Endothelial cell of umbilical vein (primary cell): ENCODE measurements at regions of chr6 and their contacts with region 1.

Region 1: DNA sequence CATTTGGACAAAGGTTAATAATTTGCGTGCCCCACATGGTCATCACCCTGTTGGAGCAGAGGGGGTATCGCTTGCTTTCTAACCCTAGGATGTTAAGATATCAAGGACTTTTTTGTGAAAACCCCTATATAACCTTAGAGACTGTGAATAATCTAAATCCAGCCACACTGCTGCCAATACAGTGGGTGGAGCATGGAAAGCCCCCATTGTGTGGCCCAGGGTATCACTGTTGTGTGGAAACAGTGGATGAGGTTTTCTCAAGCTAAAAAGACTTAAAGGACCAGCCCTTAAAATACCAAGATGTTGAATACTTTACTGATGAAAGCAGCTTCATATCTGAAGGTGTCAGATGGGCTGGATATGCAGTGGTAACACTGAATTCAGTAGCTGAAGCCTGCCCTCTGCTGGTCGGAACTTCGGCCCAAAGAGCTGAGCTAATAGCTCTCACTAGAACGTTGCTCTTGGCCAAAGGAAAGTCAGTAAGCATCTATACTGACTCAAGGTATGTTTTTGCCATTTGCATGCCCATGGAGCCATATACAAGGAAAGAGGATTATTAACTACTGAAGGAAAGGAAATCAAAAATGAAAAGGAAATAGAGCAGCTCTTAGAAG is 695.2 kb downstream of the PHF3 start:
- DNase-seq: peak; percentile 36
- H3K4me3 ChIP-seq: no peak overlapping the region
- H3K27ac ChIP-seq: no peak overlapping the region
- H3K4me1 ChIP-seq: no peaks in the 10 kb centered on the region
- H3K27me3 ChIP-seq: no peaks in the 10 kb centered on the region
- CTCF ChIP-seq: peak; percentile 46 to 62
- POLR2A ChIP-seq: no peak

Region 2: GRCh38 chr6:63352587-63353285 is 978.1 kb before region 1 on chr6:
- CTCF ChIA-PET with region 1: interaction called, 11 read pairs
- POLR2A ChIA-PET with region 1: no interaction called
- dilution Hi-C with region 1: no loop called
- intact Hi-C with region 1: no loop called
- DNase-seq: peak; percentile 27
- H3K4me3 ChIP-seq: no peak overlapping the region
- H3K27ac ChIP-seq: no peak overlapping the region
- H3K4me1 ChIP-seq: peaks cover 26% of the 10 kb centered on the region
- H3K27me3 ChIP-seq: no peaks in the 10 kb centered on the region
- CTCF ChIP-seq: peak in 1 of 2 donors; percentile 17
- POLR2A ChIP-seq: no peak

Region 3: GRCh38 chr6:63923139-63923739 is 407.6 kb before region 1 on chr6:
- CTCF ChIA-PET with region 1: interaction called, 11 read pairs
- POLR2A ChIA-PET with region 1: no interaction called
- dilution Hi-C with region 1: no loop called
- intact Hi-C with region 1: no loop called
- DNase-seq: peak; percentile 17
- H3K4me3 ChIP-seq: no peak overlapping the region
- H3K27ac ChIP-seq: no peak overlapping the region
- H3K4me1 ChIP-seq: no peaks in the 10 kb centered on the region
- H3K27me3 ChIP-seq: peaks cover 2% of the 10 kb centered on the region in 2 experiments
- CTCF ChIP-seq: peak; percentile 30 to 33
- POLR2A ChIP-seq: no peak

Region 4: DNA sequence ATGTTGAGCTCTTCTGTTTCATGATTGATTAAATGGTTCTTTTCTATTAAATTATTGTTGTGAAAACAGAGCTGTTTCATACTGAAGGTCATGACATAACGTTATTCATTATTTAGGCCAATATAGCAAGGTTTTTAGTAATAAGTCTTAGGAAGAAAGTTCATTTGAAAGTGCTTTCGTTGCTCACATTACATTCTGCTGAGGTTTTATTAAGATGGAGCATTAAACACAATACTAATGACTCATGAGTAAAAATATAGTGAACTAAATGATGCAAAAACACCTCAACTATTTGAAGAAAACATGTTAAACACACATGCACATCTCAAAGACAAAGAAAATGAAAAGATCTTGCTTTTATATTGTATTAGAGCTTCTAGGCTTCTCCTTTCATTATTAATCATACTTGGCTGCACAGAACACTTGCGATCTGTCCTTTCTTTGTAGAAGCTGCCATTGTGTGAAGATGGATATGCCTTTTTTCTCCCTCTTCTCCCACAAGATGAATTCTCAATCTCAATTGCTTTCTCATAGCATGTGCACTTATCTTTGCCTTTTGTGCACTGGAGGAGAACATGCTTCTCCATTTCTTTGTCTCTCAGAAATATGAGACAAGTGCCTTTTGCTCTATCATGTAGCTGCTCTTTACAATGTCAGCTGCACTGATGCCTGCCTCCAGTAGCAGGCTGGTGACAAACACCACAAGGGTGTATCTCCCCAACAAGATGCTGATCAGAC is 382.8 kb before region 1 on chr6:
- CTCF ChIA-PET with region 1: no interaction called
- POLR2A ChIA-PET with region 1: no interaction called
- dilution Hi-C with region 1: no loop called
- intact Hi-C with region 1: no loop called
- DNase-seq: no peak
- H3K4me3 ChIP-seq: no peak overlapping the region
- H3K27ac ChIP-seq: no peak overlapping the region
- H3K4me1 ChIP-seq: no peaks in the 10 kb centered on the region
- H3K27me3 ChIP-seq: no peaks in the 10 kb centered on the region
- CTCF ChIP-seq: no peak
- POLR2A ChIP-seq: no peak

Region 5: DNA sequence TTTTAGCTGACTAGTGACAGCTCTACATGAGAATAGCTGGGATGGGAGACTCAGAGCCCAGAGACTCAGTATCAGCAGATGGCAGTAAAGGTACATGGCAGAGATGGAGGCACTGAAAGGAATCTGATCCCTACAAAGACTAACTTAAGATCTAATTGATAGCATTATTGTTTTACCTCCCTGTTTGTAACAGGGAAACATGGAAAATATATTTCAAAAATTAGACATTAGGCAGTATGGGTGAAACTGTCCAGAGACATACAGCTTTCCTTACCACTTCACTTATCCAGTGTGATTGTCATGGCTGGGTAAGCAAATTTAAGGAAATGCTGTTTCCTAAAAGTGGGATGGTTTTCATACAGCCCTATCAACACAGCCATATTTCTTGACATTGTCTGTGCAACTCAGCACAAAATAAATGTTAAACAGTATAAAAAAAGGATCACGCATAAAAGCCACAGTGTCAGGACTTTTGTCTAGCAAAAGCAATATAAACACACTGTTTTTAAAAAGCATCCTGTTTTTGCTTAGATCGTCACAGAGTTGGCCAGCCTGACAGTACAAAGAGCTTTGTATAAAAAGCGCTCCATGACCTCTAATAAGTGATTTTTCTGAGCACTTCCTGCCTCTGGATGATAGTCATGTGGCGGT is 318.3 kb before region 1 on chr6:
- CTCF ChIA-PET with region 1: no interaction called
- POLR2A ChIA-PET with region 1: no interaction called
- dilution Hi-C with region 1: no loop called
- intact Hi-C with region 1: loop called (anchors 1 kb)
- DNase-seq: no peak
- H3K4me3 ChIP-seq: no peak overlapping the region
- H3K27ac ChIP-seq: no peak overlapping the region
- H3K4me1 ChIP-seq: no peaks in the 10 kb centered on the region
- H3K27me3 ChIP-seq: no peaks in the 10 kb centered on the region
- CTCF ChIP-seq: no peak
- POLR2A ChIP-seq: no peak

Region 6: GRCh38 chr6:64732888-64733287 is 402.1 kb after region 1 on chr6:
- CTCF ChIA-PET with region 1: interaction called, 6 read pairs
- POLR2A ChIA-PET with region 1: no interaction called
- dilution Hi-C with region 1: no loop called
- intact Hi-C with region 1: loop called (anchors 1 kb)
- DNase-seq: peak; percentile 58
- H3K4me3 ChIP-seq: no peak overlapping the region
- H3K27ac ChIP-seq: no peak overlapping the region
- H3K4me1 ChIP-seq: no peaks in the 10 kb centered on the region
- H3K27me3 ChIP-seq: no peaks in the 10 kb centered on the region
- CTCF ChIP-seq: peak; percentile 9 to 34
- POLR2A ChIP-seq: no peak

Region 7: GRCh38 chr6:64750910-64751309 is 420.1 kb after region 1 on chr6:
- CTCF ChIA-PET with region 1: no interaction called
- POLR2A ChIA-PET with region 1: no interaction called
- dilution Hi-C with region 1: no loop called
- intact Hi-C with region 1: no loop called
- DNase-seq: no peak
- H3K4me3 ChIP-seq: no peak overlapping the region
- H3K27ac ChIP-seq: no peak overlapping the region
- H3K4me1 ChIP-seq: no peaks in the 10 kb centered on the region
- H3K27me3 ChIP-seq: no peaks in the 10 kb centered on the region
- CTCF ChIP-seq: no peak
- POLR2A ChIP-seq: no peak